Right ventricle myocardium superior (tissue), 1 donor: ENCODE measurements at regions of chr16 and their contacts with region 1.

Region 1: GRCh38 chr16:83878838-83879237 is 20.1 kb upstream of the MLYCD start:
- DNase-seq: no peak
- ATAC-seq: no peak

Region 2: DNA sequence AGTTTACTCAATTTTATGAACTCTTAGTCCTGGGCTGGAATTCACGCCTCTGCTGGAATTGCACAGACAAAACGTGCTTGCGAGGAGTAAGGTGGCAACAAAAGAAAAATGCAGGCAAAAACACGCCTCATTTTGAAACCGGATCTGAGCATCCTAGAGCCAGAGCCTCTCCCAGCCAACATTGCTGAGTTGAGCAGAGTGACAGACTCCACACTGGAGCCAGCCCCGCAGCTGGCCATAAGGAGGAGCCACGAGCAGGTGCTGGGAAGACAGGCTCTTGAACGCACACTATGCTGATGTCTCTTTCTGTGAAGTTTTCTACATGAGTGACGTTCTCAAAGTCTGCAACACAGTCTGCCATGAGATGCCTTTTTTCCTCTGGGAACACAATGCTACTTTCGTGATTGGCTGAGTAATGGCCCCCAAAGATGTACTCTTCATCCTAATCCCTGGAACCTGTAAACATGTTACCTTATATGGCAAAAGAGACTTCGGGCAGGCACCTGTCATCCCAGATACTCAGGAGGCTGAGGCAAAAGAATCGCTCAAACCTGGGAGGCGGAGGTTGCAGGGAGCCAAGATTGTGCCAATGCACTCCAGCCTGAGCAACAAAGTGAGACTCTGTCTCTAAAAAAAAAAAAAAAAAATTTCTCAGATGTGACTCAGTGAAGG is 85.5 kb before region 1 on chr16:
- intact Hi-C with region 1: no loop called
- DNase-seq: no peak
- ATAC-seq: no peak

Region 3: GRCh38 chr16:83826146-83826913 is 52.5 kb before region 1 on chr16:
- intact Hi-C with region 1: loop called (anchors 5 kb)
- DNase-seq: peak; percentile 90
- ATAC-seq: peak; percentile 96

Region 4: GRCh38 chr16:83994087-83994486 is 115.2 kb after region 1 on chr16:
- intact Hi-C with region 1: no loop called
- DNase-seq: peak; percentile 46
- ATAC-seq: no peak

Region 5: GRCh38 chr16:84040823-84041820 is 162.3 kb after region 1 on chr16:
- intact Hi-C with region 1: no loop called
- DNase-seq: peak; percentile 34
- ATAC-seq: no peak